HCT116 (cell line): ENCODE measurements at regions of chr6 and their contacts with region 1.

Region 1: GRCh38 chr6:114108119-114109002 is 137.4 kb upstream of the HDAC2 start:
- DNase-seq: peak; percentile 64
- ATAC-seq: peak; percentile 100
- H3K4me3 ChIP-seq: no peak overlapping the region
- H3K27ac ChIP-seq: no peak overlapping the region
- H3K4me1 ChIP-seq: peaks cover 0 to 4% of the 10 kb centered on the region in 2 experiments; a peak in 2 of 4 replicates
- H3K27me3 ChIP-seq: no peaks in the 10 kb centered on the region
- CTCF ChIP-seq: peak; percentile 81 to 96 (median 90)
- POLR2A ChIP-seq: no peak
- RAD21 ChIP-seq: peak; percentile 79

Region 2: DNA sequence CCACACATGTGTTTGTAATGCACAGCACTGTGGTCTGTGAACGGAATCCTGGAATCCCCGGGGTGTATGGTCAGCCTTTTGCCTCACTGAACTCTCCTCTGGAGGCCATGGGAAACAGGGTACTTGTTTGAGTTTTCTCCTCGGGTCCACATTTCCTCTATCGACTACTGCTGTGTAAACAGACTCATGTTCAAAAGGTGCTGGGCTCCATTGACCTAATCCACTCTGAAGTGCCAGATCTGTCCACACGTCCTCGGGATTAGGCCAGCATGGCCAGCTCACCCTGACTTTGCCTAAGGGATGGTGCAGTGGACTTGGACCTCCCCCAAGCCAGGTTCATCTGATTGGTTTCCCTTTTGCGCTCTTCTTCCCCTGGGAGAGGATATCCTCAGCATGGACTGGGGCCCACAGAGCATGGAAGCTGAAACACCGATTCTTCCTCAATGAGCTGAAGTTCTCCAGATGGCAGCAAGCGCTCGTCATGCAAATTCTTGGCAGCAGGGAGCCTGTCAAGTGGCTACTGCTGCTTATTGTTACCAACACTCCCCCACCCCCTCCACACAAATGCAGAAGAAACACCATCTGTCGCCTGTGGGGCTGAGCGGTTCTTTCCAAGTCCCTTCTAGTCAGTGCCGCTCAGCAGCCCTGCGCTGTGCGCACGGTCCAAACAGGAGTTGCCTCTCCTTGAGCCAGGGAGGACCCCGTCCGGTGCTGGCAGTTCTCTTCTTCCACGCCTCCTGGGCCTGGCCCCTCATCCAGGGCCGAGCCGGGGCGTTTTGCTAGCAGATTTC is 543.8 kb before region 1 on chr6:
- CTCF ChIA-PET with region 1: no interaction called
- POLR2A ChIA-PET with region 1: no interaction called
- RAD21 ChIA-PET with region 1: no interaction called
- intact Hi-C with region 1: no loop called
- DNase-seq: no peak
- ATAC-seq: no peak
- H3K4me3 ChIP-seq: no peak overlapping the region
- H3K27ac ChIP-seq: no peak overlapping the region
- H3K4me1 ChIP-seq: peaks cover 9 to 22% of the 10 kb centered on the region in 2 experiments
- H3K27me3 ChIP-seq: no peaks in the 10 kb centered on the region
- CTCF ChIP-seq: no peak
- POLR2A ChIP-seq: no peak
- RAD21 ChIP-seq: no peak

Region 3: DNA sequence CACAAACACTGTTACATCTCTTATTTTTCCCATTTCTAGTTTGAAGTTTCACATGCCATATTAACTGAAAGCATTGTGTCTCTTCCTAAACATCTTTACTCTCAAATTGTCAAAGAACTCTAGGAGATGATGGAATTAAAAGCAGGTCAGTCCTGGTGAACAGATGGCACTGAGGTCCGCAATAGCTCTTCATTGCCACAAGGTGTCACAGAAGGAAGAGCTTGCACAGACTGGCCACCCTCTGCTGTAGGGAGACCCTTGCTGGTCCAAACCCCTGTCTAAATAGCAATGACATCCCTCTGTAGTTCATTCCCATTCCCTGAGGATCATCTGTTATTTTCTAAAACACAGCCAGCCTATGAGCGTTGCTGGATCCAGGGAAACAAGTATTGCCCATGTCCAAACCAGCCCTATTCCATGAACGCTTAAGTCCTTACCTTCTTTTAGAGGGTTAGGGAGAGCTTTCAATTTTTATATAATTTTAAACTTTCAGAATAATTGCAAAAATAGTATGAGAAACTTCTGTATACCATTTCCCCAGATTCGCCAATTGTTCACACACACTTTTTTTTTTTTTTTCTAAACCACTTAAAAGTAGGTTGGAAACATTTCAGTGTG is 127.3 kb before region 1 on chr6:
- CTCF ChIA-PET with region 1: interaction called, 30 read pairs
- POLR2A ChIA-PET with region 1: interaction called, 3 read pairs
- RAD21 ChIA-PET with region 1: interaction called, 3 to 4 read pairs
- intact Hi-C with region 1: no loop called
- DNase-seq: no peak
- ATAC-seq: peak; percentile 100
- H3K4me3 ChIP-seq: no peak overlapping the region
- H3K27ac ChIP-seq: no peak overlapping the region
- H3K4me1 ChIP-seq: no peaks in the 10 kb centered on the region
- H3K27me3 ChIP-seq: no peaks in the 10 kb centered on the region
- CTCF ChIP-seq: peak in 2 of 3 experiments; percentile 76 to 80; a peak in 4 of 6 replicates
- POLR2A ChIP-seq: no peak
- RAD21 ChIP-seq: peak; percentile 47

Region 4: GRCh38 chr6:113994918-113995342 is 113.4 kb before region 1 on chr6:
- CTCF ChIA-PET with region 1: interaction called, 93 read pairs
- POLR2A ChIA-PET with region 1: interaction called, 9 read pairs
- RAD21 ChIA-PET with region 1: interaction called, 10 to 13 read pairs
- intact Hi-C with region 1: loop called (anchors 1 kb)
- DNase-seq: peak; percentile 88
- ATAC-seq: peak; percentile 88
- H3K4me3 ChIP-seq: no peak overlapping the region
- H3K27ac ChIP-seq: peak overlapping the region; percentile 23; the same call in 1 of the 2 replicates
- H3K4me1 ChIP-seq: peaks cover 32 to 50% of the 10 kb centered on the region in 2 experiments
- H3K27me3 ChIP-seq: no peaks in the 10 kb centered on the region
- CTCF ChIP-seq: peak; percentile 88 to 99 (median 97)
- POLR2A ChIP-seq: no peak
- RAD21 ChIP-seq: peak; percentile 98

Region 5: DNA sequence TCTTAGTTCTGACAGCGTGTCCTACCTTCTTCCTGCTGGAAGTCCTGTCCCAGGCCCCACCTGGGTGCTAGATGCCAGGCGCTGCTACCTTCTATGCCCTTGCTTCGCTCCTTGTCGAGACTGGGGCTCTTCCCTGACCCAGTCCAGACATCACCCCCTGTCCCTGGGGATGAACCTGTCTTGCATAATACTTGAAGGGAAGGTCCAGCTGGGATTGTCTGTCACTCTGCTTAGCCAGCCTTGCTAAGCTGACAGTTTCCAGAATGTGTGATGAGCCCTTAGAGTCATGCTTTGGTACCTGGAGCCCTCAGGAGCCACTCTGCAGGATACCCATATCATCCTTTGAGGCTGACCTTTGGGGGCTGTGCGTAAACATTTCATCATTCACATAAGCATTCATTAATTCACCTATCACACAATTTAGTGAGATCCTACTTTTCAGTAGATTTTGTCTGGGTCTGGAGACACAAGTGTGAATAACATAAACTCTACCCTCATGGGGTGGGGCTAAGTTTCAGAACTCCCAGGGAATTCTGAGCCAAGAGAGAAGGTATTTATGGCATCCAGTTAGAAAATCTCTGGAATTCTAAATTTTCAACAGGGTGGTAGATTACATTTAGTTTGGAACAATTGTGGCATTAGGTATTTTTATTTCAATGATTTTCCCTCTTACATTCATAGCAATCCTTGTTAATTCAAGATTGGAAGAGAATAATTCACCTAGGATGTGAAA is 13.7 kb after region 1 on chr6:
- CTCF ChIA-PET with region 1: interaction called, 13 read pairs
- POLR2A ChIA-PET with region 1: interaction called, 5 read pairs
- RAD21 ChIA-PET with region 1: no interaction called
- intact Hi-C with region 1: no loop called
- DNase-seq: no peak
- ATAC-seq: no peak
- H3K4me3 ChIP-seq: no peak overlapping the region
- H3K27ac ChIP-seq: no peak overlapping the region
- H3K4me1 ChIP-seq: no peaks in the 10 kb centered on the region
- H3K27me3 ChIP-seq: 0 out of 2 replicates have a peak, but pooled peaks cover 3% of the 10 kb centered on the region
- CTCF ChIP-seq: no peak
- POLR2A ChIP-seq: no peak
- RAD21 ChIP-seq: no peak

Region 6: GRCh38 chr6:114181664-114182063 is 73.3 kb after region 1 on chr6:
- CTCF ChIA-PET with region 1: no interaction called
- POLR2A ChIA-PET with region 1: no interaction called
- RAD21 ChIA-PET with region 1: no interaction called
- intact Hi-C with region 1: no loop called
- DNase-seq: no peak
- ATAC-seq: no peak
- H3K4me3 ChIP-seq: no peak overlapping the region
- H3K27ac ChIP-seq: no peak overlapping the region
- H3K4me1 ChIP-seq: no peaks in the 10 kb centered on the region
- H3K27me3 ChIP-seq: peaks cover 33% of the 10 kb centered on the region
- CTCF ChIP-seq: no peak
- POLR2A ChIP-seq: no peak
- RAD21 ChIP-seq: no peak

Region 7: GRCh38 chr6:114304304-114304887 is 196.0 kb after region 1 on chr6:
- CTCF ChIA-PET with region 1: interaction called, 16 read pairs
- POLR2A ChIA-PET with region 1: no interaction called
- RAD21 ChIA-PET with region 1: no interaction called
- intact Hi-C with region 1: no loop called
- DNase-seq: peak; percentile 3
- ATAC-seq: peak; percentile 44; the same call in 1 of the 2 replicates
- H3K4me3 ChIP-seq: no peak overlapping the region
- H3K27ac ChIP-seq: no peak overlapping the region
- H3K4me1 ChIP-seq: no peaks in the 10 kb centered on the region
- H3K27me3 ChIP-seq: no peaks in the 10 kb centered on the region
- CTCF ChIP-seq: peak; percentile 39 to 54 (median 43); a peak in 5 of 6 replicates
- POLR2A ChIP-seq: no peak
- RAD21 ChIP-seq: peak; percentile 34

Region 8: DNA sequence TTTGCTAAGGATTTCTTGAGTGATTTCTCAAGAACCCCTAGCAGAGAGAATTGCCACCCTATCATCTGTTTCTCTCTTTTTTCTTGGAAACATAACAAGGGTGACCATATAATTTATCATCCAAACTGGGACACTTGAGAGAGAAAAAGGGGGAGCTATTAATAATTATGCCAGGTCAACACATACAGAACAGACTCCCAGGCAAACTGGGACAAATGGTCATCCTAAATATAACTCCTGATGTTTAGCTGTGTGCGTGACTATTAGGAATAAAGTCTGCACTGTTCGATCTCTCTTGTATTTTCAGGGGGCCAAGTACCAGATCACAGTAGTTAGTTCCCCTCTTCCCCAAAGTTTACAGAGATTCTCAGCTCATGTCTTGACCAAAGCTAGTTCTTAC is 246.1 kb after region 1 on chr6:
- CTCF ChIA-PET with region 1: no interaction called
- POLR2A ChIA-PET with region 1: no interaction called
- RAD21 ChIA-PET with region 1: no interaction called
- intact Hi-C with region 1: no loop called
- DNase-seq: no peak
- ATAC-seq: no peak
- H3K4me3 ChIP-seq: no peak overlapping the region
- H3K27ac ChIP-seq: no peak overlapping the region
- H3K4me1 ChIP-seq: no peaks in the 10 kb centered on the region
- H3K27me3 ChIP-seq: no peaks in the 10 kb centered on the region; the same call in 1 of the 2 replicates
- CTCF ChIP-seq: no peak
- POLR2A ChIP-seq: no peak
- RAD21 ChIP-seq: no peak